Activated naive CD4-positive, alpha-beta T cell treated with anti-CD3 and anti-CD28 coated beads for 36 hours (primary cell): ENCODE measurements at regions of chr16 and their contacts with region 1.

Region 1: GRCh38 chr16:66977341-66978113 is 10.9 kb upstream of the CES4A start:
- DNase-seq: peak; percentile 94
- H3K4me3 Mint-ChIP-seq: no peak overlapping the region
- H3K27ac Mint-ChIP-seq: no peak overlapping the region
- H3K4me1 Mint-ChIP-seq: peaks cover 23% of the 10 kb centered on the region
- H3K27me3 Mint-ChIP-seq: no peaks in the 10 kb centered on the region

Region 2: GRCh38 chr16:66947302-66948065 is 30.0 kb before region 1 on chr16:
- CTCF ChIA-PET with region 1: interaction called, 5 read pairs
- intact Hi-C with region 1: loop called (anchors 1 kb)
- DNase-seq: peak; percentile 95
- H3K4me3 Mint-ChIP-seq: peak overlapping the region; percentile 81
- H3K27ac Mint-ChIP-seq: no peak overlapping the region
- H3K4me1 Mint-ChIP-seq: peaks cover 17% of the 10 kb centered on the region
- H3K27me3 Mint-ChIP-seq: peaks cover 34% of the 10 kb centered on the region

Region 3: DNA sequence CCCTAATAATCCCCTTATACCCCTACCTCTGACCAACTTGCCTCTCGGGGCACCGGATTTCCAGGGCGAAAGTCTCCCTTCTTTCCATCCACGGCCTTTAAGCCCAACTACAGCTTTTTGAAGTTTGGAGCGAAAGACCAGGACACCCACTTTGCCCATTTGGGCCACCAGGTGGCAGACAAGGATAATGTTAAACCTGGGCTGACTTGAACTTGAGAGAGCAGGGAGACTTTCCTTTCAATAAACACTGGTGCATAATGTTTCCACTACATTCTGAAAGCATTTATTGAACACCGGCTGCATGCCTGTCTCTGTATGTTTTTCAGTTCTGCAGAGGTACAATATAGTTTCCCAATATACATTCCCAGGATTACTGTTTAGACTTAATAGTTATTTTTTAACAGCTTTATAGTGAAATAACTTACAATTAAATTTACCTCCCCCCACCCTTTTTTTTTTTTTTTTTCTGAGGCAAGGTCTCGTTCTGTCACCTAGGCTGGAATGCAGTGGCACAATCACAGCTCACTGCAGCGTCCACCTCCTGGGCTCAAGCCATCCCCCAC is 23.3 kb before region 1 on chr16:
- CTCF ChIA-PET with region 1: interaction called, 5 read pairs
- intact Hi-C with region 1: loop called (anchors 1 kb)
- DNase-seq: peak; percentile 90
- H3K4me3 Mint-ChIP-seq: no peak overlapping the region
- H3K27ac Mint-ChIP-seq: no peak overlapping the region
- H3K4me1 Mint-ChIP-seq: peaks cover 14% of the 10 kb centered on the region
- H3K27me3 Mint-ChIP-seq: peaks cover 27% of the 10 kb centered on the region

Region 4: DNA sequence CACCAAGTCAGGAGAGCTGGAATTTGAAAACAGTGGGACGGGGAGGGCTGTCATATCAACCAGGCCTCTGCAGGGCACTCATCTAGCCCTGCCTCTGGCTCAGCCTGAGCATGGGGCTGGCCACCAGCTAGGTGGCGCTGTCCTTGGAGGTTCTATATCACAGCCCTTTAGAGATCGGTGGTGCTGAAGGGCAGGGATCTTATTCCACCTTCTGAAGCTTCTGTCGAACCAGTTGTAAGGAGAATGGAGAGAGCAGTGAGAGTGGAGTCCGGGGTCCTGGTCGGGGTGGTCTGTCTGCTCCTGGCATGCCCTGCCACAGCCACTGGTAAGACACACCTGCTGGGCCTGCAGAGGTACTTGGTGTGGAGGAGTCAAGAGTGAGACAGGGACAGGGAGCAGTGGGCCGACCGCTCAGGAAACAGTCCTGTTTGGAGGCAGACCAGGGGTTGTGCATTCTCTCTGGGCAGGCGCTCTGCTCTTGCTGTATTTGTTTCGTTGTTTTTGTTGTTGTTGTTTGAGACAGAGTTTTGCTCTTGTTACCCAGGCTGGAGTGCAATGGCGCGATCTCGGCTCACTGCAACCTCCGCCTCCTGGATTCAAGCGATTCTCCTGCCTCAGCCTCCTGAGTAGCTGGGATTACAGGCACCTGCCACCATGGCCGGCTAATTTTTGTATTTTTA is 16.3 kb before region 1 on chr16 and contains the start of gene CES3:
- CTCF ChIA-PET with region 1: interaction called, 11 read pairs
- intact Hi-C with region 1: no loop called
- DNase-seq: peak; percentile 77
- H3K4me3 Mint-ChIP-seq: no peak within 1 kb of the TSS
- H3K27ac Mint-ChIP-seq: no peak within 1 kb of the TSS
- H3K4me1 Mint-ChIP-seq: peaks cover 19% of the 10 kb centered on the region
- H3K27me3 Mint-ChIP-seq: no peaks in the 10 kb centered on the region
- total RNA-seq, gene CES3: 0.17 to 0.55 TPM

Region 5: GRCh38 chr16:67104061-67104460 is 126.5 kb after region 1 on chr16:
- CTCF ChIA-PET with region 1: interaction called, 4 read pairs
- intact Hi-C with region 1: loop called (anchors 1 kb)
- DNase-seq: no peak
- H3K4me3 Mint-ChIP-seq: no peak overlapping the region
- H3K27ac Mint-ChIP-seq: peak overlapping the region; percentile 28
- H3K4me1 Mint-ChIP-seq: peaks cover 7% of the 10 kb centered on the region
- H3K27me3 Mint-ChIP-seq: no peaks in the 10 kb centered on the region

Region 6: DNA sequence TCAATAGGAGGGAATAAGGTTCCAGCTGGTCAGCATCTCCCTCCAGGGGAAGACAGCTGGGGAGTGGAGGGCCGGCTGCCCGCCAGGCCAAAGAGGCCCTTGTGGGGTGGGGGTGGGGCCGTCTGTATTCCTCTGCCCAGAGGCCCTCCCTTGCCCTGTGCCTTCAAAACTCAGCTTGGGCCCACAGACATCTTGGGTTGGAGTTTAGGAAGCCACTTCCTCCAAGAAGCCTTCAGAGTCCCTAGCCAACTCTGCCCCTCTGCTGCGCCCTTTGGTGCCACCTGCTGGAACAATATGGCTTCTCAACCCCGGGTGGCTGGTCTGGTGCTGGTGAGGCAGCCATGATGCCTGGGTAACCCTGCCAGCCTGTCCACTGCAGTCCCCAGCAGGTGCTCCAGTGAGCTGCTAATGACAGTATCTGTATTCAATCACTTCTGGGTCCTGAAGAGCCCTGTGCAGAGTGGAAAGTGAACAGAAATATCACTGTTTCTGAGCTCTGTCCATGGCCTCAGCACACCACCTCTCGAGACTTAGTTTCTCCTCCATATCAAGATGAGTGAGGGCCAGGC is 470.1 kb after region 1 on chr16:
- CTCF ChIA-PET with region 1: no interaction called
- intact Hi-C with region 1: loop called (anchors 10 kb)
- DNase-seq: peak; percentile 90
- H3K4me3 Mint-ChIP-seq: no peak overlapping the region
- H3K27ac Mint-ChIP-seq: no peak overlapping the region
- H3K4me1 Mint-ChIP-seq: no peaks in the 10 kb centered on the region
- H3K27me3 Mint-ChIP-seq: no peaks in the 10 kb centered on the region